ENCODE measurements at regions of chr1 and their contacts with region 1.

Region 1: DNA sequence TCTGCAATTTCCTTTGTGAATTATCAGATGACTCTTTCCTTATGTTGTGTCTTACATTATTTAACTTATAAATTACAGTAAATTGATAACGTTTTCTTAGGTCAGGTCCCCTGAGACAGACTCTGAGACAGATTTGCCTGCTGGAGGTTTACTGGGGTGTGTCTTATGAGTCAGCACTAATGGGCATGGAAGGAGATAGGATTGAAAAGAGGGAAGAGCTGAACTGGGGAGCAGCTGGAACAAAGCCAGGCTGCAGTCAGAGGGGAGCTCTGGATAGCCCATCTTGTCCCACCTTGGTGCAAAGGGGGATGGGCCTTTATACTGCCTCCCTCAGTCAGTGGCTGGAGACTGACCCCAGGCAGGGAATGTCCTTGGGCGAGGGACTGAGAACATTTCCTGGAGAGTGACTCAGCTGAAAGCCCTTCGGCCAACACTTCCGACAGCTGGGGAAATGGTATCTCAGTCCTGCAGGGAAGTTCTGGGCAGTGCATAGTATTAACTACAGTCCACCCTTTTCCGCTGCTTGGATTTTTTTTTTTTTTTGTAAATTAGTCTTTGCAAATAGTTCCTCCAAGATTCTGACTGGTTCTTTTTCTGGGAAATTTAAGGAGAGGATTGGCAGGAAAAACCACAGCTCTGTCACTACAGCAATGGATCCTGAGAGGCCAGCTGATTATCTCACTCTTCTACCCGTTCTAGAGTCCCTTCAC is 39.0 kb upstream of the CDC42BPA start:
- DNase-seq: peak; percentile 86

Region 2: GRCh38 chr1:227234998-227235405 is 122.3 kb before region 1 on chr1:
- intact Hi-C with region 1: loop called (anchors 5 kb)
- DNase-seq: no peak

Region 3: DNA sequence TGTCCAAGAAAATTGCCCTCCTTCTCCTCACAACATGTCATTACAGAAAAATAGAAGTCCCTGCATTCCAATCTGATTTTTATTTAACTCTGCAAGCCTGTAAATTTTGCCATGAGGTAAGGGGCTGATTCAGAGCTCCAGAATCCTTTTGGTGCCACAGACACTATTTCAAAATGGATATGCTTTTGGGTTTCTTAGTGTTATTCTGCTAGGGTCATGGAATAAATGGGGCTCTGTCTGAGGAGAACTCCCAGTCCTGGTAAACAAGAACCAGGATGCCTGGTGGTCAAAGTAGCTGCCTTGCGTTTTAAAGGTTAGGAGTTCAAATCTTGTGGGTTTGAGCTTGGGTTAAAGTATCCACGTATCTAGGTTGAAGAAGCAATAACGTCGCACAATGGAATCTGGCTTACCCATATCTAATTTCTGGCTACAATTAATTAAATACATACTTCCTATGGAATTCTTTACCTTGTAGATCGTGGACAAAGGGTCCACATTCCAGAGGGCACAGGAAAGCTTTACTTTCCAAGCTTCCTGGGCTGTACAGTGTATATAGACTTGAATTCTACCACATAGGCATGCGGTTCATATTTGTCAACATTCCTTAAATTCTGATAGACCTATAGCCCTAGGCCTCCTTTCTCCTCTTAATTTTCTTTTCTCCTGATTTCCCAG is 59.0 kb after region 1 on chr1:
- intact Hi-C with region 1: loop called (anchors 5 kb)
- DNase-seq: no peak

Region 4: GRCh38 chr1:227612658-227613057 is 255.3 kb after region 1 on chr1:
- intact Hi-C with region 1: no loop called
- DNase-seq: no peak